A673 (cell line): ENCODE measurements at regions of chr4 and their contacts with region 1.

Region 1: GRCh38 chr4:111963158-111963700 is 182.0 kb upstream of the FAM241A start:
- DNase-seq: no peak
- H3K4me3 ChIP-seq: no peak overlapping the region
- H3K27ac ChIP-seq: no peak overlapping the region
- H3K4me1 ChIP-seq: no peaks in the 10 kb centered on the region
- H3K27me3 ChIP-seq: no peaks in the 10 kb centered on the region
- CTCF ChIP-seq: no peak

Region 2: DNA sequence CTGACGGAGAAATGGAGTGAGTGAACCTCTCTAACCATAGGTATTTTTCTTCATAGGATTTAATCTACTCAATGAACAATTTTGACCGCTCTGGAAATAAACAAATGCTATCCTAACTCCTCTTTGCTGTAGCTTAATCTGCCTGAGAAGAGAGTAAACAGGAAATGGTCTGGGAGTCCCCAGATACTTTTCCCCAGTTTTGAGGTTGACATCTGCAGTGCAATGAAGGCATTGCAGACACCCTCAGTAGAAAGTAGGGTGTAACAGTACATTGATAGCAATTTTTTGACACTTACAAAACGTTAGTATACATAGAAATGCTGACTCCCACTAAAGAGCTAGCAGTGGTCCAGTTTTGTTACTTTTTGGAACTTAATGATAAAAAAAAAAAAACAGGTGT is 313.9 kb before region 1 on chr4:
- CTCF ChIA-PET with region 1: no interaction called
- POLR2A ChIA-PET with region 1: interaction called, 10 read pairs
- intact Hi-C with region 1: no loop called
- DNase-seq: no peak
- H3K4me3 ChIP-seq: no peak overlapping the region
- H3K27ac ChIP-seq: no peak overlapping the region
- H3K4me1 ChIP-seq: peaks cover 28% of the 10 kb centered on the region
- H3K27me3 ChIP-seq: no peaks in the 10 kb centered on the region
- CTCF ChIP-seq: no peak

Region 3: DNA sequence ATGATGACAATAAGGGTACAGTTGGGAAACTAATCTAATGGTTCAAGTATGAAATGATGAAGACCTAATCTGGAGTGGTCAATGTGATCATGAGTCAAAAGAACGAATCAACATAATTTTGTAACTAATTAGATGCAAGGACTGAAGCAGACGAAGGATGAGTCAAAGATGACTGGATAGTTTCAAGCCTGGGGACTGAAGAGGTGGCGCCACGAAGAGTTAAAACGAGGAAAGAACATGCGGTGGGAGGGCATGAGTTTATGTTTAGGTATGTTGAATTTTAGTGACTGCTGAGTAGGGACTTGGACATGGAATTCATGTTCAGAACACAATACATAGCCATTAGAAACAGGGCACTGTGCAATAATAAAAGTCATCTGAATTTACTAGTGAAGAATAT is 39.4 kb before region 1 on chr4:
- CTCF ChIA-PET with region 1: no interaction called
- POLR2A ChIA-PET with region 1: no interaction called
- intact Hi-C with region 1: no loop called
- DNase-seq: no peak
- H3K4me3 ChIP-seq: no peak overlapping the region
- H3K27ac ChIP-seq: no peak overlapping the region
- H3K4me1 ChIP-seq: no peaks in the 10 kb centered on the region
- H3K27me3 ChIP-seq: no peaks in the 10 kb centered on the region
- CTCF ChIP-seq: no peak